AG04450 (cell line): ENCODE measurements at regions of chr7 and their contacts with region 1.

Region 1: DNA sequence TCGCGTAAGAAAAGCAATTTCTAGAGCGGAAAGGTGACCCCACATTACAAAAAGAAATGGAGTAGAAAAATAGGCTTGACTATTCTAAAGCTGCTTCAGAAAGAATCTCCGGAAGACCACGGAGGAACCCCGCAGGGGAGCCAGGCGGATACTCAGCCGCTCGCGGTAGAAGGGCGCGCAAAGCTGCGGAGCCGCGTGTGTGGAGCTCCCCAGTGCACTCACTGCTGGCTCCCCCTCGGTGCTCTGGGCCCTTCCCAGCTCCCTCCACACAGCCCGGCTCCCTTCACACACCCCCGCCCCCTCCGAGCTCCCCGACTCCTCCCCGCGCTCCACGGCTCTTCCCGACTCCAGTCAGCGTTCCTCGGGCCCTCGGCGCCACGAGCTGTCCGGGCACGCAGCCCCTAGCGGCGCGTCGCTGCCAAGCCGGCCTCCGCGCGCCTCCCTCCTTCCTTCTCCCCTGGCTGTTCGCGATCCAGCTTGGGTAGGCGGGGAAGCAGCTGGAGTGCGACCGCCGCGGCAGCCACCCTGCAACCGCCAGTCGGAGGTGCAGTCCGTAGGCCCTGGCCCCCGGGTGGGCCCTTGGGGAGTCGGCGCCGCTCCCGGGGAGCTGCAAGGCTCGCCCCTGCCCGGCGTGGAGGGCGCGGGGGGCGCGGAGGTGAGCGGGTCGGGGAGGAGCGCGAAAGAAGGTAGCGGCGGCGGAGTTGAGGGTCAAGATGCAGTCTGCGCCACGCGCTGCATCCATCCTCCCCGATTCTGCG is at the start of gene STEAP2:
- DNase-seq: peak; percentile 73
- H3K4me3 ChIP-seq: peak within 1 kb of the TSS; percentile 67
- H3K27ac ChIP-seq: peak within 1 kb of the TSS; percentile 59
- H3K27me3 ChIP-seq: no peaks in the 10 kb centered on the region
- CTCF ChIP-seq: peak; percentile 75
- polyA plus RNA-seq, gene STEAP2: 5.4 and 6.4 TPM in 2 replicates

Region 2: DNA sequence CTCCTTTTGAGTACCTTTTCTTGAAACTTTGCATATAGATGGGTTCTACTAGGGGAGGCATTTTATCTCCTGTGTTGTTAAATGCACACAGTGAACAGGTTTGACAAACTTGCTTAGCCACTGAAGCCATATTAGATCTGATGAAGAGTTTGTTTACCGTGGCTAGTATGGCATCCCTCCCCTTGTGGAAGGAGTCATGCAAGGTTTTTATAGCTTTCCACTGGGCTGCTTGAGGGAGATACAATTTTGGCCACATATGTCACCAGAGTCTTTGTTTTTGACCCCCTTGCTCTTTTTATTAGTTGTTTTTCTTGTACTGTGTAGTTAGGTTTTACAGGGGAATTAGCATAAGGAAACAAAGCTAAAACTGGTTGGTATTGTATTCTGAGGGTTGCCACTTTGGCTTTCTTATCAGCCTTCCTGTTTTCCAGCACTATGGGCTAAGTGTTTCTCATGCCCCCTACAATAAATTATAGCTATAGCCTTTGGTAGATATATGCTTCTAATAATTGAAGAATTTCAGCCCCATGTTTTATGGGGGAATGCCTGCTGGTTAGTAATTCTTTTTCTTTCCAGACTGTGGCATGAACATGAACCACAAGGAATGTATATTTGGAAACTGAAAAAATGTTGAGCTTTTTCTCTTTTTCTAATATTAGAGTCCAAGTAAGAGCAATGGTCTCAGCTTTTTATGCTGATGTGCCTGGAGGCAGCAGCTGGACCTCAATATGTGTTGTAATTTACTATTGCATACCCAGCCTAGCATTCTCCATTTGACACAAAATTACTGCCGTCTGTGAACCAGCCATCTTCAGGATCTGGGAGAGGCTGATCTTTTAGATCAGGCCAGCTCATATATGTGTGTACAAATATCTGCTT is 18.5 kb before region 1 on chr7:
- CTCF ChIA-PET with region 1: interaction called, 12 read pairs
- POLR2A ChIA-PET with region 1: no interaction called
- DNase-seq: no peak
- H3K4me3 ChIP-seq: no peak overlapping the region
- H3K27ac ChIP-seq: no peak overlapping the region
- H3K27me3 ChIP-seq: no peaks in the 10 kb centered on the region
- CTCF ChIP-seq: no peak

Region 3: DNA sequence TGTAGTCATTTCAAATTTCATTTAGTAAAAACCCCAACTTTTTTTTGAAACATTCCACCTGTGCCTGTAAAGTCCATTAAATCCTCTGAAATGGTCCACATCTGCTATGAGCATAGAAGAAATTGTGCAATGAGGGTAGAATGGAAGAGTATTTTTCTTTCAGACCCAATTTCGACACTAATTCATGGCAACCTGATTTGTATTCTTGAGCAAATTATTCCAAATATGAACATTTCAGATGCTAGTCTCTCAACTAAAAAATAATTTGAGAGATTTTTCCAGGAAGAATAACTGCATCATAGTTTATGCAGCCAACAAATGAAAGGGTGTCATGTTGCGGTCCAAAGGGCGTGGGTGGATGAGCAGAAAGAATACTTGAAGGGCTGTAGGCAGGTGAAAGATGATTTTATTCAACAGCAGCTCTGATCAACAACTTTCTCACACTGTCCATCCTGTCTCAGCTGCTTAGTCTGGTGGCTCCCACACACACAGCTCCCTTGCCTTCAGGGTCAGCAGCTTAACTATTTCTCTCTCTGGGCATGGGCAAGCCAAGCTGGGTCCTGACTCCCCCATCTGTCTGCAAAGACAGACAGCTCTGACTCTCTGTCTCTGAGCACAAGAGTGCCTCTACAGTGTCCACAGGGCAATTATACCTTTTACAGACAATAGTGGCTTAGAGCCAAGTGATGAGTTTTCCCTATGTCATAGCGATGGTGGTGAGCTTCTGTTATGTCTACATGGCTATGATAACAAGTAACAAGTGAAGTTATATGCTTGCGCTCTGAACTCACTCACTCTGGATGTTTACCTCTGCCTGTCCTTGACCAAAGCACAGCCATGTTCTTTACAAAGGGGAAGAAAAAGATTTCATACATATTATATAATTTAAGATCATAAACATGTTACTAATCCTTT is 11.5 kb after region 1 on chr7:
- CTCF ChIA-PET with region 1: interaction called, 21 read pairs
- POLR2A ChIA-PET with region 1: interaction called, 9 read pairs
- DNase-seq: peak; percentile 56
- H3K4me3 ChIP-seq: no peak overlapping the region
- H3K27ac ChIP-seq: peak overlapping the region; percentile 86
- H3K27me3 ChIP-seq: no peaks in the 10 kb centered on the region
- CTCF ChIP-seq: no peak